Activated CD4-positive, alpha-beta memory T cell treated with anti-CD3 and anti-CD28 coated beads for 36 hours (primary cell): ENCODE measurements at regions of chr12 and their contacts with region 1.

Region 1: GRCh38 chr12:110583137-110584059 is at the start of gene PPTC7:
- DNase-seq: peak; percentile 99
- H3K4me3 Mint-ChIP-seq: peak within 1 kb of the TSS; percentile 94
- H3K27ac Mint-ChIP-seq: peak within 1 kb of the TSS; percentile 94
- H3K4me1 Mint-ChIP-seq: peaks cover 59% of the 10 kb centered on the region
- H3K27me3 Mint-ChIP-seq: no peaks in the 10 kb centered on the region
- total RNA-seq, gene PPTC7: 36.9 to 37.0 TPM

Region 2: DNA sequence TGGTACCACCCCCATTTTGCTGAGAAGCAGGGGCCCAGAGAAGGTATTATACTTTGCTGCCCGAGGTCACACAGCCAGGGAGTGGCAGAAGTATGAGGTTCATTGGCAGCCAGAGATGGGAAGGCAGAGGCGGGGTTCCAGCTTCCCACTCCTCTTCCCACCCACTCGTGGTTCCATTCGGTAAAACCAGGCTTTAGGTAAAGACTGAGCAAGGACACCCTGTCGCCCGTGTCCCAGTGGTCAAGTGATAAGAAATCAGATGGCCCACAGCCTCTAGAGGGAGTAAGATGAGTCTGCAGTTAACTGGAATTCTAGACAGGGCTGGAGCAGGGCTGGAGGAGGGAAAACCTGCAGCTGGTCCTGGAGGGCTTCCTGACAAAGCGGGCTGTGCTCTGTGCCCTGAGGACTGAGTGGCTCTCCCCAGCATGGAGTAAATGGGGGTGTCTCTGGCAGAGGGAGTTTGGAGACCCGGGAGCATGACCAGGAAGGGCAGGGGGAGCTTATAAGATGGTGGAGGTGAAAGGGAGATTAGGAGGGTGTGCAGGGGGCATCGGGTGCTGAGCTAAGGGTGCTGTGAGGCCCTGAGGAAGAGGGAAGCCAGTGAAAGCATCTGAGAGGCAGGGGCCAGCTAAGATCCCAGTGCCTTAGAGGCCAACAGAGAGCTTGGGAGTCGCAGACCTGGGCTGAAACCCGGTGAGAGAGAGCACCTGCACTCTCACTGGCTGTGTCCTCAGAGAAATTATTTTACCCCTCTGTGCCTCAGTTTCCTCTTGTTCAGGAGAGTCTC is 864.0 kb before region 1 on chr12:
- CTCF ChIA-PET with region 1: no interaction called
- POLR2A ChIA-PET with region 1: no interaction called
- intact Hi-C with region 1: no loop called
- DNase-seq: no peak
- H3K4me3 Mint-ChIP-seq: no peak overlapping the region
- H3K27ac Mint-ChIP-seq: no peak overlapping the region
- H3K4me1 Mint-ChIP-seq: no peaks in the 10 kb centered on the region
- H3K27me3 Mint-ChIP-seq: peaks cover 19% of the 10 kb centered on the region

Region 3: DNA sequence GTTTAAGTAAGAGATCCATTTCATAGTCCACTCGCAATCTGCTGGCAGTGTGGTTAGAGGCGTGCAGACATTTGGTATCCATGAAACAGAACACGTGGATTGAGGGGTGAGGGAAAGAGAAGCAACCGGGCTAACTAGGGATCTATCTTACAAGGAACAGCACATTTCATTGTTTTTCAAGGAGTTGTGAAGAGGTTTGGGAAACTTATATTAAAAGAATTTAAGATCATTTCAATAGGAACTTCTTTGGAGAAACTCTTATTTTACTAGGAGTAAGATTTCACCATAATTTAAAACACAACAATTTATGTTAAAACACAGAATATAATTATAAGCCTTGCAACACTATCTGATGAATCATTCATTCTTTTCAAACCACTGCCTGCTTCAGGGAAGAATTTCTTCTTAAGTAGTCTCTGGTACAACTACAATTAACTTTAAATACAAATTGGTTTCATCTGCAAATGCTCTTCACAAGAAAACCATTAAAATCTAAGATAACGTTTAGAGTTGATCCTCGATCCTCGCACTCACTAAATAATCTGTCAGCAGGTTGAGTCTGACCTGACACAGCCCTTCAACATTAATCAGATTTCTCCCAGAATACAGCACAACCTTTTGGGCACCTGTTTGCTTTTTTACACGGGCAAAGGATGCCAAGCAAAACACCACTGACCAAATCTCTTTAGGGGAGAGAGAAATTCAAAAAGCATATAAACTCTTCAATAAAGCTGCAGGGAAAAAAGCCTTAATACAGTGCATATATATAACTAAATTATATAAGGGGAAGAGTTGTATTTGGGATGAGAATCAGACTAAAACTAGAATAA is 27.6 kb before region 1 on chr12:
- CTCF ChIA-PET with region 1: interaction called, 9 read pairs
- POLR2A ChIA-PET with region 1: interaction called, 3 read pairs
- intact Hi-C with region 1: loop called (anchors 2 kb)
- DNase-seq: no peak
- H3K4me3 Mint-ChIP-seq: no peak overlapping the region
- H3K27ac Mint-ChIP-seq: no peak overlapping the region
- H3K4me1 Mint-ChIP-seq: peaks cover 46% of the 10 kb centered on the region
- H3K27me3 Mint-ChIP-seq: no peaks in the 10 kb centered on the region